WTC11 (cell line): ENCODE measurements at regions of chr2 and their contacts with region 1.

Region 1: DNA sequence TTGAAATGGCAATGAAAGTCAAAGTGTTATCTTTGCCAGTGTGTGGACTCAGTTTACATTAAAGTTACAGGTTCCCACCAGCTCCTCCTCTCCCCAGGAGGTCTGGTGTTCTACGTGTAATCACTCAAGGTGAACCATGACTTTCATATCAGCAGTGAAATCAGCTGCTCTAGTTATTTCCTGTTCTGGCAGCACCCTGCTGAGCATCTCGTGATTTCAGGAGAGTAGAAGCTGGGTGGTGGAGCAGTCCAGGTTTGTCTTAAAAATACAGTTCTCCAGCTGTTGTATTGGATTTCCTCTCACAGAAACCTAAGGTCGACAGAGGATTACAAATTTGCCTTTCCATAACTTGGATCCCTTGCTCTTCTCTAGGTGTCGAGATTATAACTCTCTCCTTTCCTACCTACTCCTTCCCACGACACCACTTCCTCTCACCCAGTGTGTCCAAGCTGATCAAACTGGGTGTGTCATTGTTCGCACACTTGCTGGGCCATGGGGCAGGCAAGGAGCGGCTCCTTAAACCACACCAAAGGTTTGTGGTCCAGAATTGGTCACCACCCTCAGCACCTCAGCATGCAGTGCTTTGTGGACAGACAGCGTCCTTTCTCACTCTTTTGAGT is 13.0 kb upstream of the ARHGAP25 start:
- DNase-seq: no peak
- ATAC-seq: no peak
- H3K4me3 Mint-ChIP-seq: no peak overlapping the region
- H3K27ac Mint-ChIP-seq: no peak overlapping the region
- H3K4me1 Mint-ChIP-seq: peaks cover 8% of the 10 kb centered on the region
- H3K27me3 Mint-ChIP-seq: no peaks in the 10 kb centered on the region
- CTCF ChIP-seq: no peak

Region 2: DNA sequence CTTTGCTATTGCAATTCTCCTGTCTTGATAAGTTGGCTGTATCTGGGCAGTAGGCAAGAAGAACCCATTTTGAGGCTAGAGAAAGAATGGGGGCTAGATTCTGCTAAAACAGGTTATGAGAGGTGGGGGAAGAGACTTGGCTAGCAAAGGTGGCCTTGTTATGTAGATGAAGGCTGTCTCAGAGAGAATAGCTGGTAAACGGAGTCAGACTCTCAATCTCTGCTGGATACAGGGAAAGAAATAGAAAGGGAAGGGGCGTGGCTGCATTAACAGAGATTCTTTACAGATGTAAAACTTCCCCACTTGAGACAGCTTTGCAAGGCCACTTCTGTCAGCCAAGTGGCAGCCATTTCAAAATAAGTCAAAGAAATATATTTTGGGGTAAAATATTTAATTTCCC is 25.0 kb before region 1 on chr2:
- CTCF ChIA-PET with region 1: no interaction called
- POLR2A ChIA-PET with region 1: no interaction called
- DNase-seq: no peak
- ATAC-seq: peak; percentile 92
- H3K4me3 Mint-ChIP-seq: no peak overlapping the region
- H3K27ac Mint-ChIP-seq: peak overlapping the region; percentile 76; the same call in 1 of the 2 replicates
- H3K4me1 Mint-ChIP-seq: peaks cover 36% of the 10 kb centered on the region
- H3K27me3 Mint-ChIP-seq: no peaks in the 10 kb centered on the region
- CTCF ChIP-seq: no peak

Region 3: DNA sequence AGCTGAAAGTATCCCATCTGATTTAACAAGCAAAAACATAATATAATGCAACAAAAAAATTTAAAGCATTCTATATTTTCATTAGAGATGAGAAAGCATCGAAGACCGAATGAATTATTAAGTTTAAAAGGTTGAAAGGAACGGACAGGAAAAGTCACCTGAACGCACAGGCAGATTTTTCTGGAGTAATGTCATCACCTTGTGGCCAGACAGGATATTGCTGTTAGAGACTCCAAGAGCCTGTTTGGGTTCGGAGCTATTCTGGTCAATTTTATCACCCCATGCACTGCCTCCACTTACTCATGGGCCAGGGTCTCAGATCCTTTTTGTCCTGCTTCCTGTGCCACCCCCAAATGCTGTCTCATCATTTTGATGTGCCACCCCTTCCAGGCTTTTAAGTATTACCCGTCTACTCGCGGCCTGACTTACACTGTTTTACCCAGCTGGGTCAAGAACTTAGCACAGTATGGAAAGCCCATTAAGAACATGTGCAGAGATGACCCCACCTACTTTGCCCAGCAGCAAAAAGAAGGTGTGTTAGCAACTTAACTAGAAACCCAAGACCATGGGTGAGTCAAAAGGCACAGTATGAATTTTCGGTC is 203.8 kb after region 1 on chr2:
- CTCF ChIA-PET with region 1: interaction called, 29 read pairs
- POLR2A ChIA-PET with region 1: no interaction called
- DNase-seq: peak; percentile 38
- ATAC-seq: peak; percentile 90
- H3K4me3 Mint-ChIP-seq: no peak overlapping the region
- H3K27ac Mint-ChIP-seq: no peak overlapping the region
- H3K4me1 Mint-ChIP-seq: peaks cover 5% of the 10 kb centered on the region
- H3K27me3 Mint-ChIP-seq: no peaks in the 10 kb centered on the region
- CTCF ChIP-seq: peak; percentile 63